ENCODE measurements at regions of chr22 and their contacts with region 1.

Region 1: DNA sequence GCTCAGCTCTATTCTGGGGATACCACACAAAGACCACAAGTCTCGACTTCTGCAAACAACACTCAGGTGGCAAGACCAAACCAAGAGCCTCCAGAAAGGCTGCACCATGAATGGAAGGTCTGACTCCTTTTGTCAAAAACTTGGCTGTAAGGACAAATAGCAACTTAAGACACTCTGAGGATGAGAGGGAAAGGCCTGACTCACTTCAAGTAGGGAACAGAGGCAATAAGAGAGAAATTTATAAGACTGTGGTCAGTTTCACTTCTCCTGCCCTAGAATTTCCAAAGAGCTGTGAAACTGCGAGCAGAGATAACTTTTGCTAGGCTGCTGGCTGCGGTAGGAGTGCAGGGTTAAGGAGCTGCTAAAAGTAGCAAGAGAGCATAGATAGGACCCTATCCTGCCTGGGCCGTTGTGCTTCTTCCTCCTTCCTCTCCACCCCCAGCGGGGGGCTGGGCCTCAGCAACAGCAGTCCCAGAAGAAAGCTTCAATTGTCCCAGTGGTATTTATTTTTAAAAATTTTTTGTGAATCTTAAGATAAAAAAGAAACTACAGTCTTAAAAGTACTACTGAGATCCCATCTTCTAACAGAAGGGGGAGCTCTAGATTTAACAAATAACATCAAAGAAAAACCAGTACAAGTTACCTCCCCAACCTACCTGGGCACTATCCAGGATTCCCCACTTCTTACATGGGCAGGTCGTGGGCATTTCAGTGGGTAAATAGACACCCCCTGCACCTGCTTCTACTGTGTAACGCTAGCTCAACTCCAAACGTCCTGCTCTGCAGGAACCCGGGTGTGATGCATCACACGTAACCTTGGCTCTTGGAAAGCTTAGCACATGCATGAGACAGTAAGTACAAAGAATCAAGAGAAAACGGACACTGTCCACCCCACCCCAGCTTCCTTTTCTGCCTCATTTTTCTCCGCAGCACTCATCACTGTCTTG is 66.4 kb downstream of the SGSM3 start:
- DNase-seq: peak; percentile 88
- ATAC-seq: peak; percentile 87
- H3K4me3 ChIP-seq: peak overlapping the region; percentile 50
- H3K27ac ChIP-seq: peak overlapping the region; percentile 84
- H3K4me1 ChIP-seq: peaks cover 72% of the 10 kb centered on the region
- H3K27me3 ChIP-seq: no peaks in the 10 kb centered on the region
- CTCF ChIP-seq: peak; percentile 45 to 52 (median 49); a peak in 5 of 6 replicates
- EP300 ChIP-seq: peak in 1 of 2 experiments; percentile 51; a peak in 3 of 4 replicates
- POLR2A ChIP-seq: no peak
- RAD21 ChIP-seq: peak; percentile 61

Region 2: GRCh38 chr22:40400159-40400558 is 36.6 kb before region 1 on chr22:
- CTCF ChIA-PET with region 1: interaction called, 19 read pairs
- POLR2A ChIA-PET with region 1: interaction called, 3 read pairs
- RAD21 ChIA-PET with region 1: interaction called, 3 read pairs
- SMC1A ChIA-PET with region 1: interaction called, 10 read pairs
- in situ Hi-C with region 1: no loop called
- intact Hi-C with region 1: no loop called
- DNase-seq: peak; percentile 63
- ATAC-seq: peak; percentile 70
- H3K4me3 ChIP-seq: no peak overlapping the region
- H3K27ac ChIP-seq: peak overlapping the region; percentile 68; the same call in 1 of the 2 replicates
- H3K4me1 ChIP-seq: peaks cover 38% of the 10 kb centered on the region
- H3K27me3 ChIP-seq: no peaks in the 10 kb centered on the region
- CTCF ChIP-seq: no peak
- EP300 ChIP-seq: no peak
- POLR2A ChIP-seq: no peak
- RAD21 ChIP-seq: no peak

Region 3: GRCh38 chr22:40463017-40463631 is 26.3 kb after region 1 on chr22:
- CTCF ChIA-PET with region 1: interaction called, 20 read pairs
- POLR2A ChIA-PET with region 1: interaction called, 3 read pairs
- RAD21 ChIA-PET with region 1: interaction called, 16 read pairs
- SMC1A ChIA-PET with region 1: interaction called, 30 read pairs
- in situ Hi-C with region 1: no loop called
- intact Hi-C with region 1: loop called (anchors 2 kb)
- DNase-seq: peak; percentile 33
- ATAC-seq: peak; percentile 93
- H3K4me3 ChIP-seq: peak overlapping the region; percentile 71
- H3K27ac ChIP-seq: peak overlapping the region; percentile 67
- H3K4me1 ChIP-seq: no peaks in the 10 kb centered on the region; the same call in 1 of the 2 replicates
- H3K27me3 ChIP-seq: no peaks in the 10 kb centered on the region
- CTCF ChIP-seq: no peak
- EP300 ChIP-seq: no peak
- POLR2A ChIP-seq: peak; percentile 53
- RAD21 ChIP-seq: no peak

Region 4: GRCh38 chr22:40487663-40488249 is 51.0 kb after region 1 on chr22:
- CTCF ChIA-PET with region 1: interaction called, 202 read pairs
- POLR2A ChIA-PET with region 1: interaction called, 11 read pairs
- RAD21 ChIA-PET with region 1: interaction called, 34 read pairs
- SMC1A ChIA-PET with region 1: interaction called, 58 read pairs
- in situ Hi-C with region 1: no loop called
- intact Hi-C with region 1: loop called (anchors 2 kb)
- DNase-seq: no peak
- ATAC-seq: peak; percentile 48; the same call in 2 of the 3 replicates
- H3K4me3 ChIP-seq: no peak overlapping the region
- H3K27ac ChIP-seq: no peak overlapping the region
- H3K4me1 ChIP-seq: peaks cover 11% of the 10 kb centered on the region
- H3K27me3 ChIP-seq: no peaks in the 10 kb centered on the region
- CTCF ChIP-seq: peak; percentile 67 to 82 (median 67)
- EP300 ChIP-seq: no peak
- POLR2A ChIP-seq: no peak
- RAD21 ChIP-seq: peak; percentile 65

Region 5: DNA sequence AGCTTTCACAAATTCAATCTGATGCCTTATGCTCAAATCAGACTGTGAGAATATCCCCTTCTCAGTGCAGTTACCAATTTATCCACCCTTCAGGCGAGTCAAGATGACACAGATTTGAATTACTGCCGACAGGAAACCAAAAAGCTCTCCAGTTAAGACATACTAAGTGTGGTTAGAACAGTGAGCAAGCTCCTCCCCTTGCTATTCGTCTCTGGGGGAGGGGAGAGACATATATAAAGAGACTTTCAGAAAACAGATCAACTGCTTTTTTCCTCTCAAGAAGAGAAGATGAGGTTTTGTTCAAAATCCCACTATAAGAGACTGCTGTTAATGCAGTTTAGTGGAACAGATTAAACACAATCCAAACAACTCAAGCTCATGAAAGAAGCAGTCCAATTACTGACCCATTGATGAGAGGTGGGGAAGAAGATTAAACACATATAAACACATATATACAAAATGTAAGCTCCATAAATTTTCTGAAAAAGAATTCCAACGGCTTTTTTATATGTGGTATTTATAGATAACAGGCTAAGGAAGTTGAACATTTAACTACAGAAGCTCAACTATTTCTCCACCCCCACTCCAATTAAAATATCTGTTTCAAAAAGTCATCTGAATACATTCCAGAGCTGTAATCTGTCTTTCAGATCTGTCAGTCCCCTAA is 97.1 kb after region 1 on chr22:
- CTCF ChIA-PET with region 1: interaction called, 35 read pairs
- POLR2A ChIA-PET with region 1: interaction called, 8 read pairs
- RAD21 ChIA-PET with region 1: interaction called, 70 read pairs
- SMC1A ChIA-PET with region 1: interaction called, 46 read pairs
- in situ Hi-C with region 1: no loop called
- intact Hi-C with region 1: no loop called
- DNase-seq: peak; percentile 74
- ATAC-seq: peak; percentile 88
- H3K4me3 ChIP-seq: peak overlapping the region; percentile 76
- H3K27ac ChIP-seq: peak overlapping the region; percentile 75
- H3K4me1 ChIP-seq: peaks cover 21% of the 10 kb centered on the region
- H3K27me3 ChIP-seq: no peaks in the 10 kb centered on the region
- CTCF ChIP-seq: no peak
- EP300 ChIP-seq: no peak
- POLR2A ChIP-seq: no peak
- RAD21 ChIP-seq: peak; percentile 15; the same call in 1 of the 2 replicates

Region 6: GRCh38 chr22:40651563-40652501 is 215.1 kb after region 1 on chr22:
- CTCF ChIA-PET with region 1: interaction called, 152 read pairs
- POLR2A ChIA-PET with region 1: no interaction called
- RAD21 ChIA-PET with region 1: interaction called, 121 read pairs
- SMC1A ChIA-PET with region 1: interaction called, 141 read pairs
- in situ Hi-C with region 1: no loop called
- intact Hi-C with region 1: no loop called
- DNase-seq: no peak
- ATAC-seq: peak; percentile 85
- H3K4me3 ChIP-seq: peak overlapping the region; percentile 49; the same call in 1 of the 2 replicates
- H3K27ac ChIP-seq: peak overlapping the region; percentile 85
- H3K4me1 ChIP-seq: peaks cover 8% of the 10 kb centered on the region
- H3K27me3 ChIP-seq: no peaks in the 10 kb centered on the region
- CTCF ChIP-seq: no peak
- EP300 ChIP-seq: no peak
- POLR2A ChIP-seq: peak; percentile 91
- RAD21 ChIP-seq: no peak

Measured in GM12878 (cell line).